Activated T-helper 2 cell treated with anti-CD3 and anti-CD28 coated beads, Interferon-gamma antibody, Interleukin-2, Interleukin-4, amounts not matched to agents 10 μg/mL and 5 μg/mL and 100 μg/mL, durations not matched to agents 14 hours and 24 hours and 36 hours (primary cell): ENCODE measurements at regions of chr18 and their contacts with region 1.

Region 1: GRCh38 chr18:47930931-47931717 is 665 bp upstream of the SMAD2 start:
- DNase-seq: peak; percentile 96
- H3K4me3 Mint-ChIP-seq: peak overlapping the region; percentile 83
- H3K27ac Mint-ChIP-seq: peak overlapping the region; percentile 92
- H3K4me1 Mint-ChIP-seq: peaks cover 44% of the 10 kb centered on the region
- H3K27me3 Mint-ChIP-seq: peaks cover 2% of the 10 kb centered on the region

Region 2: GRCh38 chr18:47893939-47894699 is 37.0 kb before region 1 on chr18:
- intact Hi-C with region 1: loop called (anchors 5 kb)
- DNase-seq: no peak
- H3K4me3 Mint-ChIP-seq: peak overlapping the region; percentile 35
- H3K27ac Mint-ChIP-seq: peak overlapping the region; percentile 55
- H3K4me1 Mint-ChIP-seq: peaks cover 63% of the 10 kb centered on the region
- H3K27me3 Mint-ChIP-seq: no peaks in the 10 kb centered on the region

Region 3: GRCh38 chr18:47917923-47918610 is 13.1 kb before region 1 on chr18:
- intact Hi-C with region 1: loop called (anchors 1 kb)
- DNase-seq: no peak
- H3K4me3 Mint-ChIP-seq: peak overlapping the region; percentile 76
- H3K27ac Mint-ChIP-seq: peak overlapping the region; percentile 98
- H3K4me1 Mint-ChIP-seq: peaks cover 83% of the 10 kb centered on the region
- H3K27me3 Mint-ChIP-seq: no peaks in the 10 kb centered on the region

Region 4: GRCh38 chr18:48022531-48023329 is 91.6 kb after region 1 on chr18:
- intact Hi-C with region 1: loop called (anchors 2 kb)
- DNase-seq: no peak
- H3K4me3 Mint-ChIP-seq: no peak overlapping the region
- H3K27ac Mint-ChIP-seq: no peak overlapping the region
- H3K4me1 Mint-ChIP-seq: peaks cover 5% of the 10 kb centered on the region
- H3K27me3 Mint-ChIP-seq: peaks cover 28% of the 10 kb centered on the region

Region 5: GRCh38 chr18:48951448-48952286 is 1020.5 kb after region 1 on chr18:
- intact Hi-C with region 1: loop called (anchors 10 kb)
- DNase-seq: peak; percentile 67
- H3K4me3 Mint-ChIP-seq: peak overlapping the region; percentile 93
- H3K27ac Mint-ChIP-seq: peak overlapping the region; percentile 94
- H3K4me1 Mint-ChIP-seq: peaks cover 40% of the 10 kb centered on the region
- H3K27me3 Mint-ChIP-seq: peaks cover 9% of the 10 kb centered on the region